Activated T-helper 2 cell treated with anti-CD3 and anti-CD28 coated beads, Interferon-gamma antibody, Interleukin-2, Interleukin-4, amounts not matched to agents 10 μg/mL and 5 μg/mL and 100 μg/mL, durations not matched to agents 14 hours and 24 hours and 36 hours (primary cell): ENCODE measurements at regions of chr12 and their contacts with region 1.

Region 1: DNA sequence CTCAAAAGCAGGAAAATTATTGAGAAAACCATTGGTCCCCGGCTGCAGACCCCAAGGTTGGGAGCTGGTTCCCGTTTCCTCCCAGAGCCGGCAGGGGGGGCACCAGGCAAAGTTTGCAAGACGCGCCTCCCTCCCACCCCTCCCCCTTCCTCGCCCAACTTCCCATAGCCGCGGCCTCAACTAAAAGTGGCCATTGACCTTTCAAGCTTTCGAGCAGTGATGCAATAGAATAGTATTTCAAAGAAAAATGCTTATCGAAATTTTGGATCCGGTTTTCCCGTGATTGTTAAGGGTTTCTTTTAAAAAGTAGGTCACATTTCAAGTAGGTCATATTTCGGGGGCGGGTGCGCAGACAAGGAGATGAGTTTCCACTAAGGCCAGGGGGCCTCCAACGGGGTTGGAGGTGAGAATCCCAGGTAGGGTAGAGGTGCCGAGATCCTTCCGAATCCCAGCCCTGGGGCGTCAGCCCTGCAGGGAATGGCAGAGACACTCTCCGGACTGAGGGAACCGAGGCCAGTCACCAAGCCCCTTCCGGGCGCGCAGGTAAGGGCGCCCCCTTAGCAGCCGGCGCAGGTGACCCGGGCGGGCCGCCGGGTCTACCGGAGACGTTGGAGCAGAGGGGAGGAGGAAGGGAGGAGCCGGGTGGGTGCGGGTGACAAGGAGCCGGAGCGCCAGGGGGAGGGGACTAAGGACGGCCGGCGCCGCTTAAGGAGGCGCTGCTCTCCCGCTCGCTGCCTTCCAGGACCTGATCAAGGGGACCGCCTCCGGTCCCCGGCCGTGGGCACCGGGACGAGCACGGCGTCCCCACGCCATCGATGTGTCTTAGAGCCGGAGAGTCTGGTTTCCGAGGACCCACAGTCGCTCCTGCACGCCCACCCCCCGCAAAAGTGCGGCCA is 2.6 kb upstream of the SOCS2 start:
- DNase-seq: peak; percentile 71
- H3K4me3 Mint-ChIP-seq: peak overlapping the region; percentile 83
- H3K27ac Mint-ChIP-seq: peak overlapping the region; percentile 83
- H3K4me1 Mint-ChIP-seq: peaks cover 17% of the 10 kb centered on the region
- H3K27me3 Mint-ChIP-seq: peaks cover 20% of the 10 kb centered on the region

Region 2: GRCh38 chr12:93243689-93244513 is 326.0 kb before region 1 on chr12:
- intact Hi-C with region 1: no loop called
- DNase-seq: no peak
- H3K4me3 Mint-ChIP-seq: no peak overlapping the region
- H3K27ac Mint-ChIP-seq: peak overlapping the region; percentile 2
- H3K4me1 Mint-ChIP-seq: peaks cover 37% of the 10 kb centered on the region
- H3K27me3 Mint-ChIP-seq: no peaks in the 10 kb centered on the region

Region 3: GRCh38 chr12:93441617-93442410 is 128.1 kb before region 1 on chr12 and contains the start of gene UBE2N:
- intact Hi-C with region 1: loop called (anchors 5 kb)
- DNase-seq: peak; percentile 94
- H3K4me3 Mint-ChIP-seq: peak within 1 kb of the TSS; percentile 98
- H3K27ac Mint-ChIP-seq: peak within 1 kb of the TSS; percentile 95
- H3K4me1 Mint-ChIP-seq: peaks cover 38% of the 10 kb centered on the region
- H3K27me3 Mint-ChIP-seq: no peaks in the 10 kb centered on the region
- total RNA-seq, gene UBE2N: 258 and 261 TPM in 2 replicates

Region 4: DNA sequence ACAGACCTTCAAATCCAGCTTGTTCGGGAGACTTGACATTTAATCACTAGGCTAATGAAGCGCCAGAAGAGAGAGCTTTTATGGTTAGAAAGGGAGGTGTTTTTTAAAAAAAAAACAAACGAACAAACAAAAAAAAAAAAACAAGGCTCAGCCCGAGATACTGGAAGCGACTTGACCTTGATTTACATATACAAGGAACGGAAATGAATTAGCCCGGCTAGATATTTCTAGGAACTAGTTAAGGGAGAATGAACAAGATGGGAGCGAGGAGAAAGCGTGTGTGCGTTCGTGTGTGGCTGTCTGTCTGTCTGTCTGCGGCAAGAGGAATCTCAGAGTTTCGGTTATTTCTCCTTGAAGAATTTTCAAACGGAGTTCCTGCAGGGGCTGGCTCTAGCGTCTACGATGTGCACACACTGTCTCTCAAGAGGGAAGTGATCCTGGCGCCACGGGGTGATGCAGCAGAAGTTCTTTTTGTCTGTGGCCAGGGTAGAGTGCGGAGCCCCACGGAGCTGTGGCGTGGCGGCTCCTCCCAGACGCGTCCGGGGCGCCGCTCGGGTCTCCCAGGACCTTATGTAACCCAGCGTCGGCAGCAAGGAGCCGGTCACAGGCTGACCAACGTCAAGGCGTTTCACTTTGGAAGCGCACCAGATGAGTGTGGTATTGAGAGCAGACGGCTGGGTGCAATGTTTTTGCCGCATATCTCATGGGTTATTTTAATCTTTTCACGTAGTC is 21.4 kb after region 1 on chr12:
- intact Hi-C with region 1: loop called (anchors 1 kb)
- DNase-seq: peak; percentile 25
- H3K4me3 Mint-ChIP-seq: peak overlapping the region; percentile 87
- H3K27ac Mint-ChIP-seq: peak overlapping the region; percentile 14
- H3K4me1 Mint-ChIP-seq: peaks cover 36% of the 10 kb centered on the region
- H3K27me3 Mint-ChIP-seq: peaks cover 53% of the 10 kb centered on the region

Region 5: GRCh38 chr12:93766796-93767523 is 197.1 kb after region 1 on chr12:
- intact Hi-C with region 1: loop called (anchors 5 kb)
- DNase-seq: peak; percentile 28
- H3K4me3 Mint-ChIP-seq: no peak overlapping the region
- H3K27ac Mint-ChIP-seq: no peak overlapping the region
- H3K4me1 Mint-ChIP-seq: peaks cover 32% of the 10 kb centered on the region
- H3K27me3 Mint-ChIP-seq: peaks cover 7% of the 10 kb centered on the region

Region 6: GRCh38 chr12:93879476-93880421 is 309.8 kb after region 1 on chr12:
- intact Hi-C with region 1: loop called (anchors 2 kb)
- DNase-seq: no peak
- H3K4me3 Mint-ChIP-seq: no peak overlapping the region
- H3K27ac Mint-ChIP-seq: peak overlapping the region; percentile 78
- H3K4me1 Mint-ChIP-seq: peaks cover 24% of the 10 kb centered on the region
- H3K27me3 Mint-ChIP-seq: peaks cover 4% of the 10 kb centered on the region

Region 7: GRCh38 chr12:95217377-95218149 is 1647.7 kb after region 1 on chr12 and contains the starts of genes FGD6 and VEZT:
- intact Hi-C with region 1: loop called (anchors 10 kb)
- DNase-seq: peak; percentile 98
- H3K4me3 Mint-ChIP-seq: peak within 1 kb of the TSS; percentile 98
- H3K27ac Mint-ChIP-seq: peak within 1 kb of the TSS; percentile 99
- H3K4me1 Mint-ChIP-seq: peaks cover 26% of the 10 kb centered on the region
- H3K27me3 Mint-ChIP-seq: peaks cover 13% of the 10 kb centered on the region
- total RNA-seq, gene FGD6: 0.69 and 1.1 TPM in 2 replicates
- total RNA-seq, gene VEZT: 62.6 and 63.1 TPM in 2 replicates